ENCODE measurements at regions of chr15 and their contacts with region 1.

Region 1: DNA sequence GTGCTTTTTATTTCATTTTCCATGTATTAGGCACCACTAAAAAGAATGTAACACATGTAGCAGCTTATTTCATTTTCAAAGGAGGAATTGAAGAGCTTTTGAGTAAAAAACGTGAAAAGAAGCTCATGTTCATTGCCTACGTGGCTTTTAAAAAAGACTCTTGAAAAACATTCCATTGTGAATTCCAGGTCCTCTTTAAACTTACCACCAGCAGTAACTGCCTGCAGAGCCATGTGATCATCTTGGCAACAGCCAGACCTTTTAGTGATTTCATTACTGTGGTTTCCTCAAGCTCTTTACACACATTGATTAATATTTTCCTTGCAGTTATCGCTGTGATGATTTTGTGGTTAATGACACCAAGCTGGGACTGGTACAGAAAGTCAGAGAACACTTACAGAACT is 43.8 kb upstream of the FBXL22 start:
- DNase-seq: peak; percentile 92
- H3K4me3 ChIP-seq: no peak overlapping the region
- H3K27ac ChIP-seq: peak overlapping the region; percentile 57
- H3K4me1 ChIP-seq: peaks cover 22% of the 10 kb centered on the region
- H3K27me3 ChIP-seq: no peaks in the 10 kb centered on the region
- CTCF ChIP-seq: no peak

Region 2: GRCh38 chr15:63487076-63487757 is 66.2 kb before region 1 on chr15:
- CTCF ChIA-PET with region 1: interaction called, 4 read pairs
- dilution Hi-C with region 1: no loop called
- in situ Hi-C with region 1: loop called in 1 of 2 experiments (anchors 10 kb)
- intact Hi-C with region 1: no loop called
- DNase-seq: peak; percentile 58
- H3K4me3 ChIP-seq: no peak overlapping the region
- H3K27ac ChIP-seq: no peak overlapping the region
- H3K4me1 ChIP-seq: peaks cover 10% of the 10 kb centered on the region
- H3K27me3 ChIP-seq: no peaks in the 10 kb centered on the region
- CTCF ChIP-seq: peak; percentile 90 to 96